Right ventricle myocardium inferior (tissue), 1 donor: ENCODE measurements at regions of chr19 and their contacts with region 1.

Region 1: GRCh38 chr19:5138606-5139582 is 170.0 kb downstream of the KDM4B start:
- DNase-seq: peak; percentile 86
- ATAC-seq: no peak

Region 2: DNA sequence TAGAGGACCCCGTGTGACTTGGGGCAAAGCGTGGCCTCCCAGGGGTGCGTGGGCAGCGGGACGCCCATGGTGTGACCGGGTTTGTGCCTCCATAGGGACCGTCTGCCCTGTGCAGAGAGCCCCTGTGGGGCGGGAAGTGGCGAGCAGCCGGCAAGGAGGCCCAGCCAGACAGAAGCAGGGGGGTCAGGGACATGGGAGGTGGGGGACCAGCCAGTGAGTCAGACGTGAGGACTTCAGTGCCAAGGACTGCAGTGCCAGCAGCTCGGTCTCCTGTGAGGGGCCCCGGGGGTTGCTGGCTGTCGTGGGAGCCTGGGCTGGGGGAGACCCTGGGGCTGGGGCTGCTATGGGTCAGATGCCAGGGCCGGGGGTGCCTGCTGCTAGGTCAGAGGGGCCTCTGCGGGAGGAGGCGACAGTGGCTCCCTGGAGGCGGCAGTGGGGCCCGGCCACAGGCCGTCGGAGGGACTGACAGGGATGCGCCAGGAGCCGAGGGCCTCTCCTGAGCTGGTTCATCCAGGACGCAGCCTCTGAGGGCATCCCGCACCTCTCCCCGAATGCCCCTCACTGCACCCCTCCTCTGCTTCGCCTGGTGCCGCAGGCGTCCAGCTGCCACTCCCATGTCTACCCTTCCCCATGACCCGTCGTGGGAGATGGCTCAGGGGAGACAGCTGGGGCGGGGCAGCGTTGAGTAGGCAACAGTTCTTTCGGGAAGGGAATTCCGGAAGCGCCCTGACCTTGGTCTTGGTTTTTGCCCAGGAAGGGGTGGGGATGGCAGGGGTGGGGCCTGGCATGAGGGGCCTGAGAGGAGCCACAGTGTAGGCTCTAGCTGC is 90.0 kb before region 1 on chr19:
- intact Hi-C with region 1: loop called (anchors 5 kb)
- DNase-seq: no peak
- ATAC-seq: no peak

Region 3: GRCh38 chr19:5091018-5091683 is 47.7 kb before region 1 on chr19:
- intact Hi-C with region 1: loop called (anchors 5 kb)
- DNase-seq: no peak
- ATAC-seq: peak; percentile 52

Region 4: DNA sequence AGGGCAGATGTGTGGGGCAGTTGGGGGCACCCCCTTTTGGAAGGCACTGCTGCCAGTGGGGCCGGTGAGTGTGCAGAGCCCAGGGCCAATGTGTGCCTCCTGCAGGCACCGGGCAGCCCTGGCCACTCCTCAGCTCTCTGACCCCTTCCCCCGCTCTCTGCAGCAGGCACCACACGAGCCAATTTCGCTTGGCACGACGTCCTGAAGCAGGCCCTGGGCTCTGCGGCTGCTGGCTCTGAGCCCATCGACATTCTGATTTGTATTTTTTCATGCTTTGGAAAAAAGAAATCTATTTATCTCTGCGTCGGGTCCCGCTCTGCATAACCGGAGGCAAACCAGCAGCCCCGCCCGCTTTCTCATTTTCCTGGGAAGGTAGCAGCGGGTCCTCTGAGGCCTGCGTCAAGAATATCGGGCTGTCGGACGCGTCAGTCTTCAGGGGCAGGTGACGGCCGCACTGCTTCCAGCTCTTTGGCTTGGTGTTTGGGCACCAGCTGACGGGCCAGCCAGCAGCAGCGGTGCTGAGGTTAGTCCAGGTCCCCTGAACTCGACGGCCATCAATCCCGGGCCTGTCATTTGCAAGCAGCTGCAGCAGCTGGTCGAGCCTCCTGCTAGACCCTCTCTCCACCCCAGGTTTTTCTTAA is 35.7 kb before region 1 on chr19:
- intact Hi-C with region 1: no loop called
- DNase-seq: peak; percentile 82
- ATAC-seq: peak; percentile 79

Region 5: DNA sequence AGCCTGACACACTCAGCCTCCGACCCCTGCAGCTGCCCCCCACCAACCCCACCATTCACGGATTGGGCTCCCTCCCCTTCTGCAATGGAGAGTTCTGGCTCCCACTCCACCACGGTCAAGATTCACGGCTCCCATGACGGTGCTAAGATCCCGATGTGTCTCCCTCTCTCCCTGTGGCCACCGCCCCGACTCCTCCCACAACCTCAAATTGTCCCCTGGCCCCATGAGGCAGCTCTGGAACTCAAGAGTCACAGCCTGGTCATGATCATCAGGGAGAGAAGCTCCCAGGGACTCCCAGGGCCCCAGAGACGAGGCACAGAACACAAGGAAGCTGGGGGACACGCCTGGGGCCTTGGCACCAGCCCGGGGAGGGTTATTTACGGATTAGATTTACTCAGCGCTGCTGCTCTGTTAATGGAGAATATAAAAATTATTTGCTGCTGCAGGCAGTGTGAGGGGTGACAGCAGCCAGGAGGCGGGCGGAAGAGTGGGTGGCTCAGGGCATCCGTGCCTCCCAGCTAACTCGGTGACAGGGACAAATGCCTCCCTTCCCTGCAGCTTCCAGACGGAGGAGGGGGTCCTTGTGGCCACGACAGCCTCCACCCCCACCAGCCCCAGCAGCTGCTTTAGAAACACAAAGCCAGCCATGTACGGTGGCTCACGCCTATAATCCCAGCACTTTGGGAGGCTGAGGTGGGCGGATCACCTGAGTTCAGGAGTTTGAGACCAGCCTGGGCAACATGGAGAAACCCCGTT is 17.5 kb after region 1 on chr19:
- intact Hi-C with region 1: no loop called
- DNase-seq: no peak
- ATAC-seq: no peak

Region 6: DNA sequence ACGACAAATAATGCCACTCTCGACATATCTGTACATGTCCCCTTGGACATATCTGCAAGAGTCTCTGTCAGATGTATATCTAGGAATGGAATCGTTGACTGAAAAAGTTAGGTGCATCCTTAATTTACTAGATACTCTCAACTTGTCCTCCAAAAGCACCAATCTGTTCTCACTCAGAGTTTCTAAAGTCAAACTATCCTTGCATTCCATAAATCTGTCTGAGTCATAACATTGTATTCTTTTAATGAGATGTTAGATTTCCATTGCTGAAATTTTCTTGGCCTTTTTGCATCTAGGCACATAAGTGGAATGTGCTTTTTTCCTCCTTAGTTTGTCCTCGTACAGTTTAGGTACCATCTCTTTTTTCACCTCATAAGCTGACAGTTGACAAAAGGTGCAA is 62.0 kb after region 1 on chr19:
- intact Hi-C with region 1: no loop called
- DNase-seq: no peak
- ATAC-seq: no peak